Endothelial cell of umbilical vein (primary cell): ENCODE measurements at regions of chr9 and their contacts with region 1.

Region 1: DNA sequence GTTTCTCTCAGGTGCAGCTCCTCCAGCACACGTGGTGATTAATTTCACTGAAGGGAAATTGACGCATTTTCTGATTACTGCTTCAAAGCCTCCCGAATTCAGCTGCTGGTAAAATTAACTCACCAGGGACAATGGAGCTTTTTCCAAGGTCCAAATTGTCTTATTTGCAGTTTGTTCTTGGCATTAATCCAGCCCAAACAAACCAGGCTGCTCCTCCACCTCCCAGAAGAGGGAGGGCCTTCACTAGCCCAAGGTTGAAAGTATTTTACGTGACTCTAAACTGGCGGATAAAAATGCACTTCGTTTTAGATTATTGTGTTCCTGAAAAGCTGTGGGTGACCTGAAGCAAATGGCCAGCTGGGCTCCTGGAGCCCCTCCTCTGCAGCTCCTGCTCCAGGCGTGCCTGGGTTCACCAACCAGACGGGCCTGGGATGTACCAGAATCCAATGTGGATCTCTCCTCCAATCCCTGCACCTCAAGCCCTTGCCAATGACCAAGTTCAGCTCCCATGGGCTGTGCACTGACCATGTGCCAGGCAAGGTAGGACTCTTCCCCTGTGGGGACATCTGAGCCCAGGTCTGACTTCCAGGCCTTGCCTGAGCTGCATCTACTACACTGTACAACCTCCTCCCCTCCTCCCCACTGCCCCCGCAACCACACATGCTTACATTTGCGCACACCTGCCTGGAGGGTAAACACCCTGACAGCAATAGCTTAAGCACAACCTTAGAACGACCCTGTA is 193.4 kb downstream of the CDK5RAP2 start:
- DNase-seq: peak; percentile 68
- H3K4me3 ChIP-seq: no peak overlapping the region
- H3K27ac ChIP-seq: no peak overlapping the region
- H3K4me1 ChIP-seq: no peaks in the 10 kb centered on the region
- H3K27me3 ChIP-seq: no peaks in the 10 kb centered on the region
- CTCF ChIP-seq: no peak
- POLR2A ChIP-seq: no peak

Region 2: GRCh38 chr9:120366646-120367019 is 19.9 kb before region 1 on chr9:
- CTCF ChIA-PET with region 1: interaction called, 7 read pairs
- POLR2A ChIA-PET with region 1: no interaction called
- dilution Hi-C with region 1: no loop called
- intact Hi-C with region 1: loop called (anchors 1 kb)
- DNase-seq: peak; percentile 83
- H3K4me3 ChIP-seq: no peak overlapping the region
- H3K27ac ChIP-seq: peak overlapping the region; percentile 78
- H3K4me1 ChIP-seq: peaks cover 12% of the 10 kb centered on the region
- H3K27me3 ChIP-seq: peaks cover 0 to 3% of the 10 kb centered on the region in 2 experiments
- CTCF ChIP-seq: peak; percentile 46 to 60
- POLR2A ChIP-seq: peak; percentile 32

Region 3: GRCh38 chr9:120490888-120491595 is 104.5 kb after region 1 on chr9:
- CTCF ChIA-PET with region 1: no interaction called
- POLR2A ChIA-PET with region 1: no interaction called
- dilution Hi-C with region 1: no loop called
- intact Hi-C with region 1: no loop called
- DNase-seq: no peak
- H3K4me3 ChIP-seq: no peak overlapping the region
- H3K27ac ChIP-seq: no peak overlapping the region
- H3K4me1 ChIP-seq: no peaks in the 10 kb centered on the region
- H3K27me3 ChIP-seq: no peaks in the 10 kb centered on the region
- CTCF ChIP-seq: no peak
- POLR2A ChIP-seq: no peak